A549 (cell line): ENCODE measurements at regions of chrX and their contacts with region 1.

Region 1: DNA sequence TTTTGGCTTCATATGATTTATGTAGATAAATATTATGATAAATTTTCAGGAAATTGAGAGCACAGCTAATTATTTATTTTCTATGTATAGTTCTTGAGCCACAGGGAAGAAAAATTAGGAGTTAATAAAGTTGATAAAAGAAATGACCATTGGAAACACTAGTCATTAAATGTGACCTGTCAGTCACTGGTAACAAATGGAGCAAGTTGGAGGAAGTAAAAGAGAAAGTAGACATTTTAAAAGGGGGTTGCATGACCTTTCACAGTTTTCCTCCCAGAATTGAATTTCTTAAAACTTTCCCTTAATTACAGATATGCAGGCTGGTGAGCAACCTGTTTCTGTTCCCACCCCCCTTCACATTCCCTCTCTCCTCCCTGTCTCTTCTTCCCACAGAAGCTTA is 5.3 kb downstream of the SMIM9 start:
- DNase-seq: no peak
- ATAC-seq: no peak
- H3K4me3 ChIP-seq: no peak overlapping the region
- H3K27ac ChIP-seq: no peak overlapping the region
- H3K4me1 ChIP-seq: no peaks in the 10 kb centered on the region
- CTCF ChIP-seq: no peak
- EP300 ChIP-seq: no peak
- POLR2A ChIP-seq: no peak
- RAD21 ChIP-seq: no peak

Region 2: GRCh38 chrX:154370882-154371770 is 458.0 kb before region 1 on chrX:
- CTCF ChIA-PET with region 1: no interaction called
- POLR2A ChIA-PET with region 1: no interaction called
- DNase-seq: peak; percentile 70 to 96
- ATAC-seq: peak; percentile 30 to 65
- H3K4me3 ChIP-seq: peak overlapping the region; percentile 98
- H3K27ac ChIP-seq: peak overlapping the region; percentile 98 to 100
- H3K4me1 ChIP-seq: peaks cover 46% of the 10 kb centered on the region
- CTCF ChIP-seq: no peak
- EP300 ChIP-seq: no peak
- POLR2A ChIP-seq: peak; percentile 100
- RAD21 ChIP-seq: no peak

Region 3: GRCh38 chrX:154458954-154459778 is 370.0 kb before region 1 on chrX:
- CTCF ChIA-PET with region 1: no interaction called
- POLR2A ChIA-PET with region 1: interaction called, 13 read pairs
- DNase-seq: no peak
- ATAC-seq: peak; percentile 62 to 76
- H3K4me3 ChIP-seq: peak overlapping the region; percentile 59
- H3K27ac ChIP-seq: peak overlapping the region; percentile 74 to 97; a peak in 4 of 6 replicates
- H3K4me1 ChIP-seq: peaks cover 11% of the 10 kb centered on the region
- CTCF ChIP-seq: no peak
- EP300 ChIP-seq: no peak
- POLR2A ChIP-seq: no peak
- RAD21 ChIP-seq: no peak

Region 4: DNA sequence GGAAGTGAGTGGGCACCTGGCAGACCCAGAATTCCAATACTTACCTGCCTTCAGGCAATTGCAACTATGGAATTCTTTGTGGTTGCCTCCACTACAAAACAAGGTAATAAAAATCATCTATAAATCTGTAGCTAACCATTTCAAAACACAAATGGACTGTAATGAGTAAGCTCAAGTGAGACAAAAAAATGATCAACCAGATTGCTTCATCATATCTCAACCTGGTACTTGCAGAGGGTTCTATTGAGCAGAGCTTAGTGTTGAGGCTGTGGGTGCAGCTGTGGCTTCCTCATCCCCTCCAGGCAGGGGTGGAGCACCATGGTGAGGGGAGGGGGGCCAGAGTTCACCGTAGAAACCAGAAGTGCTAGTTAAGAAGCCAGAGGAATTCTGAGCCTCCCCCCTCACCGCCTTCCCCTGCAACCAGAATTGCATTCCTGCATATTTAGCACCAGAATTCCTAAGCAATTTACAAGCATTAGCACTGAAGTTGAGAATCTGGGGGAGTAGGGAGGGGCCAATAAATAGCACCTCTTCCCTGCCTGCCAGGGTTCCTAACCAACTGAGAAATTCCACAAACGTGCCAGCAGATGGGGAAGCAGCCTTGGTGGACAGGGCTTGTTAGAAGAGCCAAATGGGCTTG is 232.7 kb before region 1 on chrX:
- CTCF ChIA-PET with region 1: no interaction called
- POLR2A ChIA-PET with region 1: no interaction called
- DNase-seq: no peak
- ATAC-seq: peak in 1 of 2 experiments; percentile 30; a peak in 1 of 6 replicates
- H3K4me3 ChIP-seq: no peak overlapping the region
- H3K27ac ChIP-seq: no peak overlapping the region
- H3K4me1 ChIP-seq: no peaks in the 10 kb centered on the region
- CTCF ChIP-seq: no peak
- EP300 ChIP-seq: no peak
- POLR2A ChIP-seq: no peak
- RAD21 ChIP-seq: no peak

Region 5: DNA sequence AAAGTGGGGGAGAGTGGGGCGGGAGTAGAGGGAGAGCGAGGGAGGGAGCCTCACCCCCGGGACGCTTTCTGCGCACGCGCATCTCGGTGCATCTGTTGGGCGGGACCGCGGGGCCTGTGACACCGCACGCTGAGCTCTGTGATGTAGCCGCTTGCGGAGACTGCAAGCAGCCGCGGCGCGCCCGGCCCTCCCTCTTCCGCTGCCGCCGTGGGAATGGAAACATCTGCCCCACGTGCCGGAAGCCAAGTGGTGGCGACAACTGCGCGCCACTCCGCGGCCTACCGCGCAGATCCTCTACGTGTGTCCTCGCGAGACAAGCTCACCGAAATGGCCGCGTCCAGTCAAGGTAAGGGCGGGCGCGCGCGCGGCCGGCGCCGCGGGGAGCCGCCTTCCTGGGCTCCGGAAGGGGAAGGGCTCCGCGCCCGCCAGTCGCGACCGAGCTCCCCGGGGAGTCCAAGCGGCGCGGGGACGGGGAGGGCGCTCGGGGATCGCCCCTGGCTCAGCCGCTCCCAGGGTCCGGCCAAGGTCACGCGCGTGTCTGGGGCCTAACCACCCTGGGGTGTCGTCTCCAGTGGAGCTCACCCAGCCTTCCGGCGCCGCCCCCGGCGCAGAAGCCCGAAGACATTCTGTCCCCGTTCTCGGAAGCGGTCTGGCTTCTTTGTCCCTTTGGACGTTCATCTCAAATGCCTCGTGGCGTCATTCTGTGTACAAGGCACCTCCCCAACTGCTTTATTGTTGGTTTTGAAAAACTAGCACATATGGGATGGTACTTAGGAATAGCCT is 197.8 kb after region 1 on chrX and contains the start of gene FUNDC2:
- CTCF ChIA-PET with region 1: no interaction called
- POLR2A ChIA-PET with region 1: no interaction called
- DNase-seq: peak; percentile 7 to 98
- ATAC-seq: peak; percentile 91 to 93
- H3K4me3 ChIP-seq: peak within 1 kb of the TSS; percentile 62
- H3K27ac ChIP-seq: peak within 1 kb of the TSS; percentile 89 to 98
- H3K4me1 ChIP-seq: peaks cover 27% of the 10 kb centered on the region
- CTCF ChIP-seq: no peak
- EP300 ChIP-seq: no peak
- POLR2A ChIP-seq: peak; percentile 43
- RAD21 ChIP-seq: no peak
- polyA plus RNA-seq, gene FUNDC2: 159 and 190 TPM in 2 replicates